Upper lobe of right lung (tissue), 1 donor: ENCODE measurements at regions of chr10 and their contacts with region 1.

Region 1: DNA sequence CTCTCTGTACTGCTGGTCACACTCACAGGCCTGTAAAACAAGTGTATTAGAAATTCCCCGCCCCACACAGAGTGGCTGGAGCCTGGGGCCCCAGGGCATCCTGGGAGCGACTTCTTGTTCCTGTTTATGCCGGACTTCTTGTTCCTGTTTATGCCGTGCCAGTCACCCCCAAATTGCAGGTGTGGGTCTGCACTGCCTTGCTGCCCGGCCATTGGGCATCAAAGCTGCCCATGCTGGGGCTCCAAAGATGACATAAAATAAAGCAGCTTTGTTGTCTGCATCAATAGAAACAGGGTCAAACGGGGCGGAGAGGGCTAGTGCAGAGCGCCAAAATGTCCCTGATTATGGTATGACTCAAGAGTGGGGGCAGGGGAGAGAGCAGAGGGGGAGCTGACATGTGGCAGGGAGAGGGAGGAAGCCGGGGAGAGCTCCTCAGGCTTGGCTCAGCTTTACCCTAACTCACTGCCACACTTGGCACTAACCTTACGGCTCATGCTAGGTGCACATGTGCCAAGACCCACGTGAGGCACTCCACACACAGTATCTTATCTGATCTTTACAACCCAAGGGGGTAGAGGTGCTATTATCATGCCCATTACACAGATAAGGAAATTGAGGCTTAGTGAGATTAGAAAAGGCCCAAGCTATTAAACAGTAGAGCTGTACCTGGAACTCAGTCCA is 98.4 kb downstream of the PIP4K2A start:
- DNase-seq: peak; percentile 79
- ATAC-seq: peak; percentile 92
- H3K4me3 ChIP-seq: peak overlapping the region; percentile 34
- H3K27ac ChIP-seq: peak overlapping the region; percentile 34
- H3K4me1 ChIP-seq: peaks cover 62% of the 10 kb centered on the region
- H3K27me3 ChIP-seq: no peaks in the 10 kb centered on the region
- CTCF ChIP-seq: no peak

Region 2: GRCh38 chr10:22714479-22715289 is 98.7 kb after region 1 on chr10 and contains the start of gene PIP4K2A:
- intact Hi-C with region 1: loop called (anchors 10 kb)
- DNase-seq: peak; percentile 91
- ATAC-seq: peak; percentile 92
- H3K4me3 ChIP-seq: peak within 1 kb of the TSS; percentile 72
- H3K27ac ChIP-seq: peak within 1 kb of the TSS; percentile 85
- H3K4me1 ChIP-seq: peaks cover 10% of the 10 kb centered on the region
- H3K27me3 ChIP-seq: no peaks in the 10 kb centered on the region
- CTCF ChIP-seq: no peak
- total RNA-seq, gene PIP4K2A: 61.2 TPM